Breast epithelium (tissue), 4 donors: ENCODE measurements at regions of chr17 and their contacts with region 1.

Region 1: DNA sequence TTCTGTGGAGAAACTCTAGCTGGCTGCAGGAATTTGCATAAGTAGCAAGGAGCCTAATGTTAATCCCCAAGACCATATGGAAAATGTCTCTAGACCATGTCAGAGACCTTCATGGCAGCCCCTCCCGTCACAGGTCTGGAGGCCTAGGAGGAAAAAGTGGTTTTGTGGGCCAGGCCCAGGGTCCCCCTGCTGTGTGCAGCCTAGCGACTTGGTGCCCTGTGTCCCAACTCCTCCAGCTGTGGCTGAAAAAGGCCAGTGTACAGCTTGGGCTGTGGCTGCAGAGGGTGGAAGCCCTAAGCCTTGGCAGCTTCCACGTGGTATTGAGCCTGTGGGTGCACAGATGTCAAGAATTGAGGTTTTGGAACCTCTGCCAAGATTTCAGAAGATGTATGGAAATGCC is 306.9 kb upstream of the CA10 start:
- DNase-seq: no peak
- H3K4me3 ChIP-seq: no peak overlapping the region
- H3K27ac ChIP-seq: no peak overlapping the region
- H3K4me1 ChIP-seq: no peaks in the 10 kb centered on the region
- H3K27me3 ChIP-seq: no peaks in the 10 kb centered on the region
- CTCF ChIP-seq: no peak
- POLR2A ChIP-seq: no peak

Region 2: GRCh38 chr17:51445946-51446533 is 1019.4 kb before region 1 on chr17:
- intact Hi-C with region 1: no loop called
- DNase-seq: no peak
- H3K4me3 ChIP-seq: no peak overlapping the region
- H3K27ac ChIP-seq: no peak overlapping the region
- H3K4me1 ChIP-seq: no peaks in the 10 kb centered on the region
- H3K27me3 ChIP-seq: no peaks in the 10 kb centered on the region
- CTCF ChIP-seq: no peak
- POLR2A ChIP-seq: no peak

Region 3: GRCh38 chr17:52524096-52524637 is 58.8 kb after region 1 on chr17:
- intact Hi-C with region 1: loop called (anchors 10 kb)
- DNase-seq: no peak
- H3K4me3 ChIP-seq: no peak overlapping the region
- H3K27ac ChIP-seq: no peak overlapping the region
- H3K4me1 ChIP-seq: no peaks in the 10 kb centered on the region
- H3K27me3 ChIP-seq: no peaks in the 10 kb centered on the region
- CTCF ChIP-seq: no peak
- POLR2A ChIP-seq: no peak

Region 4: GRCh38 chr17:53527473-53527872 is 1062.1 kb after region 1 on chr17:
- intact Hi-C with region 1: loop called (anchors 5 kb)
- DNase-seq: no peak
- H3K4me3 ChIP-seq: no peak overlapping the region
- H3K27ac ChIP-seq: no peak overlapping the region
- H3K4me1 ChIP-seq: no peaks in the 10 kb centered on the region
- H3K27me3 ChIP-seq: no peaks in the 10 kb centered on the region
- CTCF ChIP-seq: no peak
- POLR2A ChIP-seq: no peak